ENCODE measurements at regions of chr6 and their contacts with region 1.

Region 1: GRCh38 chr6:31271641-31272357 is at the start of gene HLA-C:
- DNase-seq: peak; percentile 93
- ATAC-seq: peak; percentile 89
- H3K4me3 Mint-ChIP-seq: peak within 1 kb of the TSS; percentile 90
- H3K27ac Mint-ChIP-seq: peak within 1 kb of the TSS; percentile 99
- H3K4me1 Mint-ChIP-seq: peaks cover 42% of the 10 kb centered on the region
- H3K27me3 Mint-ChIP-seq: no peaks in the 10 kb centered on the region
- CTCF ChIP-seq: no peak
- total RNA-seq, gene HLA-C: 833 to 860 TPM

Region 2: GRCh38 chr6:31351401-31352309 is 79.9 kb after region 1 on chr6:
- CTCF ChIA-PET with region 1: interaction called, 3 read pairs
- POLR2A ChIA-PET with region 1: interaction called, 52 read pairs
- intact Hi-C with region 1: loop called (anchors 2 kb)
- DNase-seq: peak; percentile 39
- ATAC-seq: peak; percentile 48
- H3K4me3 Mint-ChIP-seq: peak overlapping the region; percentile 90
- H3K27ac Mint-ChIP-seq: peak overlapping the region; percentile 62
- H3K4me1 Mint-ChIP-seq: peaks cover 45% of the 10 kb centered on the region
- H3K27me3 Mint-ChIP-seq: no peaks in the 10 kb centered on the region
- CTCF ChIP-seq: no peak

Region 3: DNA sequence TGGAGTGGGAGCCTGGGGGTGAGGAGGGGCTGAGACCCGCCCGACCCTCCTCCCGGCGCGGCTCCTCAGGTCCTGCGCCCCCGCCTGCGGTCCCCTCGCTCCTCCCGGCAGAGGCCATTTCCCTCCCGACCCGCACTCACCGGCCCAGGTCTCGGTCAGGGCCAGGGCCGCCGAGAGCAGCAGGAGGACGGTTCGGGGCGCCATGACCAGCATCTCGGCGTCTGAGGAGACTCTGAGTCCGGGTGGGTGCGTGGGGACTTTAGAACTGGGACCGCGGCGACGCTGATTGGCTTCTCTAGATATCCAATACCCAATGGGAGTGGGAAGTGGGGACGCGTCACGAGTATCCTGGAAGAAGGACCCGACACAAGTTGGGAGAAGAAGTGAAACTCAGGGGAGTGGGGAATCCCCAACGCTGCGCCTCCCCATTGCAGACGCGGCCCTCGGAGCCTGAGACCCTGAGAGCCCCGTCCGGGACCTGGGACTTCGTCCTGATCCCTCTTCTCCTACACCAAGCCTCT is 85.2 kb after region 1 on chr6 and contains the start of gene HLA-B:
- CTCF ChIA-PET with region 1: no interaction called
- POLR2A ChIA-PET with region 1: interaction called, 52 read pairs
- intact Hi-C with region 1: loop called (anchors 2 kb)
- DNase-seq: peak; percentile 90
- ATAC-seq: peak; percentile 84
- H3K4me3 Mint-ChIP-seq: peak within 1 kb of the TSS; percentile 90
- H3K27ac Mint-ChIP-seq: peak within 1 kb of the TSS; percentile 100
- H3K4me1 Mint-ChIP-seq: peaks cover 45% of the 10 kb centered on the region
- H3K27me3 Mint-ChIP-seq: no peaks in the 10 kb centered on the region
- CTCF ChIP-seq: no peak
- total RNA-seq, gene HLA-B: 2,892 to 2,968 TPM

Measured in activated CD8-positive, alpha-beta T cell treated with anti-CD3 and anti-CD28 coated beads for 36 hours (primary cell).